ENCODE measurements at regions of chr15 and their contacts with region 1.

Region 1: GRCh38 chr15:63752075-63752684 is 81.6 kb downstream of the HERC1 start:
- DNase-seq: no peak
- H3K4me3 ChIP-seq: no peak overlapping the region
- H3K27ac ChIP-seq: no peak overlapping the region
- H3K4me1 ChIP-seq: peaks cover 0 to 6% (median 0%) of the 10 kb centered on the region in 4 donors
- H3K27me3 ChIP-seq: no peaks in the 10 kb centered on the region
- CTCF ChIP-seq: peak; percentile 72 to 80 (median 76)
- EP300 ChIP-seq: no peak
- POLR2A ChIP-seq: no peak

Region 2: DNA sequence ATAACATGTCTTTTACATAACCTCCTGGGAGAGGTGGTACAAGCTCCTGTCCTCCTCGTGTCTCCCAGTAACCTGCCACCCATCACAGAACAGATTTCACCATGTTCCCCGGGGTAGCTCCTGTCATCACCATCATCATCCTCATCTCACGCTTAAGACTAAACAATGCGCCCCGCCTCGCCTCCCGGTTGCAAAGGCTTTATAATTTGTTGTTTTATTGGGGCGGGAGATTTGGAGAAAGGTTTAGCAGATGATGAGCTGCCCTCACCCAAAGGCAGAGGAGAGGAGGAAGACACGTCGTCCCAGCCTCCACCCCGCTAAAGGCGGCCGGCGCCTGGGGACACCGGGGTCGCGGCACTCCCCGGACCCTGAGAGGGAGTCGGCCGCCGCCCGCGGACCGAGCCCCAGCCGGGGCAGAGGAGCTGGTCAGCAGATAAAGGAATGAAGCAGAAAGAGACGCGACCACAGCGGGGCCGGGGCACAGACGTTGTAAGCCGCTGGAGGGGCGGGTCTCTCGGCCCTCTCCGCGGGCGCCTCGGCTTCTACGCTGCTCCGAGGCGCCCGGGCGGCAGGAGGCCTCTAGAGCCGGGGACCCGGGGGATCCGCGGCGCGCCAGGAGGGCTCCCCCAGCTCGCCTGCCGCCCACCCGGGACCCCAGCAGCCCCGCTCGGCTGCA is 81.0 kb after region 1 on chr15:
- intact Hi-C with region 1: loop called (anchors 5 kb)
- DNase-seq: peak; percentile 73
- H3K4me3 ChIP-seq: peak overlapping the region; percentile 61 to 90 (median 76)
- H3K27ac ChIP-seq: peak overlapping the region; percentile 90 to 94 (median 90)
- H3K4me1 ChIP-seq: peaks cover 0 to 54% (median 36%) of the 10 kb centered on the region in 4 donors
- H3K27me3 ChIP-seq: no peaks in the 10 kb centered on the region
- CTCF ChIP-seq: no peak
- EP300 ChIP-seq: no peak
- POLR2A ChIP-seq: no peak

Region 3: GRCh38 chr15:63891079-63891767 is 139.0 kb after region 1 on chr15:
- intact Hi-C with region 1: loop called (anchors 1 kb)
- DNase-seq: peak; percentile 87
- H3K4me3 ChIP-seq: no peak overlapping the region
- H3K27ac ChIP-seq: no peak overlapping the region
- H3K4me1 ChIP-seq: no peaks in the 10 kb centered on the region
- H3K27me3 ChIP-seq: no peaks in the 10 kb centered on the region
- CTCF ChIP-seq: peak; percentile 37 to 86 (median 76)
- EP300 ChIP-seq: no peak
- POLR2A ChIP-seq: no peak

Region 4: GRCh38 chr15:64046347-64047153 is 294.4 kb after region 1 on chr15 and contains the start of gene DAPK2:
- intact Hi-C with region 1: loop called (anchors 2 kb)
- DNase-seq: peak; percentile 78
- H3K4me3 ChIP-seq: peak within 1 kb of the TSS; percentile 28 to 60 (median 52)
- H3K27ac ChIP-seq: peak within 1 kb of the TSS in 3 of 4 donors; percentile 2 to 47 (median 9)
- H3K4me1 ChIP-seq: peaks cover 0 to 19% (median 11%) of the 10 kb centered on the region in 4 donors
- H3K27me3 ChIP-seq: no peaks in the 10 kb centered on the region
- CTCF ChIP-seq: peak in 2 of 4 experiments; percentile 31 to 68
- EP300 ChIP-seq: no peak
- POLR2A ChIP-seq: no peak
- total RNA-seq, gene DAPK2: 2.1 to 5.5 (median 3.3) TPM

Region 5: DNA sequence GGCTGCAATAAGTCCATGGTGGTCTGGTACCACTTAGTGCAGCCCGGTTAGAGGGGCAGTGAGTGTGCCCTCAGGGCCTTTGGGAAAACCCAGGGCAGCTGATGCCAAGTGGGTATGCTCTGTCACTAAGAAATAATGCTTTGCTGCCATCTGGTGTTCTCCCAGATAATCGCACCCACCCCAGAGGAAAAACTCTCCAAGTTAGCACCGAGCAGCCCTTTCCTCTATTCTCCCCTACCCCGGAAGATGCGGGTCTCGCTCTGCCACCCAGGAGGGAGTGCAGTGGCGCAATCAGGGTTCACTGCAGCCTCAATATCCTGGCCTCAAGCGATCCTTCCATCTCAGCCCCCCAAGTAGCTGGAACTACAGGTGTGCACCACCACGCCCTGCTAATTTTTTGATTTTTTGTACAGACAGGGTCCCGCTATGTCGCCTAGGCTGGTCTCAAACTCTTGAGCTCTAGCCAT is 315.4 kb after region 1 on chr15:
- intact Hi-C with region 1: loop called (anchors 5 kb)
- DNase-seq: peak; percentile 73
- H3K4me3 ChIP-seq: peak overlapping the region in 1 of 4 donors; percentile 5
- H3K27ac ChIP-seq: no peak overlapping the region
- H3K4me1 ChIP-seq: peaks cover 0 to 39% (median 32%) of the 10 kb centered on the region in 4 donors
- H3K27me3 ChIP-seq: no peaks in the 10 kb centered on the region
- CTCF ChIP-seq: peak; percentile 66 to 89 (median 78)
- EP300 ChIP-seq: no peak
- POLR2A ChIP-seq: no peak